HCT116 (cell line): ENCODE measurements at regions of chr12 and their contacts with region 1.

Region 1: GRCh38 chr12:113184900-113185773 is at the starts of genes DDX54 and RITA1:
- DNase-seq: peak; percentile 78
- ATAC-seq: peak; percentile 87
- H3K4me3 ChIP-seq: peak within 1 kb of the TSS; percentile 87 to 89
- H3K27ac ChIP-seq: peak within 1 kb of the TSS; percentile 95
- H3K4me1 ChIP-seq: peaks cover 8 to 42% of the 10 kb centered on the region in 2 experiments; a peak in 3 of 4 replicates
- H3K27me3 ChIP-seq: no peaks in the 10 kb centered on the region
- CTCF ChIP-seq: no peak
- POLR2A ChIP-seq: peak; percentile 57
- RAD21 ChIP-seq: no peak
- total RNA-seq, gene DDX54: 110 TPM
- total RNA-seq, gene RITA1: 20.7 TPM

Region 2: DNA sequence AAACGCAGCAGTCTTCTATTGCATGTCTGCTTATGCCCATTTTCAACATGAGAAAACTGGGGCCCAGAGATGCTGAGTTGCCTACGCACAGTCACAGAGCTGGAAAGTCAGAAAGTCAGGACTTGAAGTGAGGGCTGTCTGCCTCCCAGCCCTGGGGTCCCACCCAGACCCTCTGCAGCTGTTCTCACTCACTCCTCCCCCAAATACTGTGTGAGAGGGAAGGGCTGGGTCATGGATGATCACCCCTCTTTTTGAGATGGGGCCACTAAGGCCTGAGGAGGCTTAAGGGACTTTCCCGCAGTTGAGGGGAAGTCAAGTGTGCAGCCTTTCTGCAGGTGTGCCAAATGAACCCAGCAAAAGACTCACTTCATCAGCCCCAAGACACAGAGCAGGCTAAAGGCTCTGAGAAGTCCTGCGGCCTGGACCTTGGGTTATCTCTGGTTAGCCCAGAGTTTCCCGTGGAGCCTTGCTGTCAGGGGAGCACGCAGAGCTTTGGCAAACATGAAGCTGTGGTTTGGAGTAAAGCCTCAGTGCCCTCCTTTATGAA is 109.9 kb before region 1 on chr12:
- CTCF ChIA-PET with region 1: no interaction called
- POLR2A ChIA-PET with region 1: no interaction called
- RAD21 ChIA-PET with region 1: no interaction called
- intact Hi-C with region 1: no loop called
- DNase-seq: no peak
- ATAC-seq: no peak
- H3K4me3 ChIP-seq: no peak overlapping the region
- H3K27ac ChIP-seq: no peak overlapping the region
- H3K4me1 ChIP-seq: no peaks in the 10 kb centered on the region
- H3K27me3 ChIP-seq: no peaks in the 10 kb centered on the region
- CTCF ChIP-seq: no peak
- POLR2A ChIP-seq: no peak
- RAD21 ChIP-seq: no peak

Region 3: GRCh38 chr12:113135178-113136127 is 49.7 kb before region 1 on chr12 and contains the start of gene RASAL1:
- CTCF ChIA-PET with region 1: no interaction called
- POLR2A ChIA-PET with region 1: no interaction called
- RAD21 ChIA-PET with region 1: no interaction called
- intact Hi-C with region 1: loop called (anchors 2 kb)
- DNase-seq: peak; percentile 75
- ATAC-seq: peak; percentile 92
- H3K4me3 ChIP-seq: peak within 1 kb of the TSS; percentile 78 to 94
- H3K27ac ChIP-seq: peak within 1 kb of the TSS; percentile 72
- H3K4me1 ChIP-seq: peaks cover 13 to 34% of the 10 kb centered on the region in 2 experiments
- H3K27me3 ChIP-seq: no peaks in the 10 kb centered on the region
- CTCF ChIP-seq: peak; percentile 37 to 77 (median 65); a peak in 5 of 6 replicates
- POLR2A ChIP-seq: peak; percentile 37
- RAD21 ChIP-seq: no peak
- total RNA-seq, gene RASAL1: 16.0 TPM

Region 4: GRCh38 chr12:113174461-113175384 is 10.4 kb before region 1 on chr12:
- CTCF ChIA-PET with region 1: interaction called, 16 read pairs
- POLR2A ChIA-PET with region 1: no interaction called
- RAD21 ChIA-PET with region 1: no interaction called
- intact Hi-C with region 1: no loop called
- DNase-seq: no peak
- ATAC-seq: peak; percentile 91
- H3K4me3 ChIP-seq: no peak overlapping the region
- H3K27ac ChIP-seq: no peak overlapping the region
- H3K4me1 ChIP-seq: no peaks in the 10 kb centered on the region
- H3K27me3 ChIP-seq: no peaks in the 10 kb centered on the region
- CTCF ChIP-seq: peak; percentile 90 to 99 (median 94)
- POLR2A ChIP-seq: no peak
- RAD21 ChIP-seq: peak; percentile 88

Region 5: DNA sequence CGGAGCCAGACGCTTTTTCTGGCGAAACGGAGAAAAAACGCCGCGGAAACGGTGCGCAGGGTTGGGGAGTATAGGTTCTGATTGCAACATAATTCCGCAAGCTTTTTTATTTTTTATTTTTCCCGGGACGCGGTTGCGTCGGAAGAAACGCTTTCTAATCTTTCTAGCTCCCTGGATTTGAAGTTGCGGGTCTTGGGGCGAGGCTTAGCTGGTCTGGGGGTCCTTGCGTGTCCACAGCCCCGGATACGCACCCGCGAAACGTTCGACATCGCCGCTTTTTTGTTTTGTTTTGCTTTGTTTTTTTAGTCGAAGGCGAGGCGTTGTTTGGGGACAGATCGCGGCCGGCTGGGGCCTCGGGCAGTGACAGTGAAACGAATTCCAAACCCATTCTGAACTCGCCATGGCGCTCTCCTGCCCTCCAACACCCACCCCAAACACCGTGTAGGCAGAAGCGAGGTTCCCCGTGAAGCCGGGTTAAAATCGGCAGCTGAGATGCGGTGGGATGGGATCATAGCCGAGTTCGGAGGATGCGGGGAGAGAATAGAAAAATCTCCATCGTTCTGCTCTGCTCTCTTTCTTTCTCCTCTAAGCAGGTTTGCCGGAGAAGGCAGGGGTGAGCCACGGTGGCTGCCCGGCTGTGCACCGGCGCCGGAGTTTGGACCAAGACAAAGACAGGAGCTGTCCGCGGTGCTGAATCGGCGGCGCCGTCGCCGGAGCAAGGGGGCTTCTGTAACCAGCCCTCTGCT is 294.6 kb after region 1 on chr12:
- CTCF ChIA-PET with region 1: no interaction called
- POLR2A ChIA-PET with region 1: no interaction called
- RAD21 ChIA-PET with region 1: no interaction called
- intact Hi-C with region 1: no loop called
- DNase-seq: no peak
- ATAC-seq: no peak
- H3K4me3 ChIP-seq: no peak overlapping the region
- H3K27ac ChIP-seq: no peak overlapping the region
- H3K4me1 ChIP-seq: no peaks in the 10 kb centered on the region
- H3K27me3 ChIP-seq: peaks cover 36% of the 10 kb centered on the region
- CTCF ChIP-seq: no peak
- POLR2A ChIP-seq: no peak
- RAD21 ChIP-seq: no peak